HepG2 (cell line): ENCODE measurements at regions of chr12 and their contacts with region 1.

Region 1: GRCh38 chr12:55446326-55446725 is 2.5 kb downstream of the OR6C2 start:
- DNase-seq: peak; percentile 29
- ATAC-seq: peak; percentile 78
- H3K4me3 ChIP-seq: no peak overlapping the region
- H3K27ac ChIP-seq: no peak overlapping the region
- H3K4me1 ChIP-seq: no peaks in the 10 kb centered on the region
- H3K27me3 ChIP-seq: no peaks in the 10 kb centered on the region
- CTCF ChIP-seq: peak; percentile 77
- EP300 ChIP-seq: no peak
- POLR2A ChIP-seq: no peak
- RAD21 ChIP-seq: peak; percentile 83

Region 2: GRCh38 chr12:55499810-55500252 is 53.5 kb after region 1 on chr12:
- CTCF ChIA-PET with region 1: no interaction called
- POLR2A ChIA-PET with region 1: no interaction called
- in situ Hi-C with region 1: no loop called
- intact Hi-C with region 1: loop called (anchors 5 kb)
- DNase-seq: peak; percentile 98
- ATAC-seq: peak; percentile 99
- H3K4me3 ChIP-seq: peak overlapping the region in 2 of 3 experiments; percentile 36 to 46; a peak in 2 of 6 replicates
- H3K27ac ChIP-seq: peak overlapping the region; percentile 86
- H3K4me1 ChIP-seq: peaks cover 49% of the 10 kb centered on the region
- H3K27me3 ChIP-seq: no peaks in the 10 kb centered on the region
- CTCF ChIP-seq: peak; percentile 3; the same call in 1 of the 2 replicates
- EP300 ChIP-seq: peak; percentile 79 to 90; a peak in 3 of 4 replicates
- POLR2A ChIP-seq: no peak
- RAD21 ChIP-seq: no peak

Region 3: GRCh38 chr12:55619354-55620138 is 173.2 kb after region 1 on chr12:
- CTCF ChIA-PET with region 1: interaction called, 28 read pairs
- POLR2A ChIA-PET with region 1: no interaction called
- in situ Hi-C with region 1: loop called (anchors 5 kb)
- intact Hi-C with region 1: loop called (anchors 1 kb)
- DNase-seq: peak; percentile 92
- ATAC-seq: peak; percentile 97
- H3K4me3 ChIP-seq: no peak overlapping the region
- H3K27ac ChIP-seq: no peak overlapping the region
- H3K4me1 ChIP-seq: no peaks in the 10 kb centered on the region
- H3K27me3 ChIP-seq: no peaks in the 10 kb centered on the region
- CTCF ChIP-seq: peak; percentile 87
- EP300 ChIP-seq: no peak
- POLR2A ChIP-seq: no peak
- RAD21 ChIP-seq: peak; percentile 94